HepG2 (cell line): ENCODE measurements at regions of chr4 and their contacts with region 1.

Region 1: GRCh38 chr4:185142912-185143595 is at the start of gene SLC25A4:
- DNase-seq: peak; percentile 77
- ATAC-seq: peak; percentile 91
- H3K4me3 ChIP-seq: peak within 1 kb of the TSS; percentile 75 to 81 (median 79)
- H3K27ac ChIP-seq: peak within 1 kb of the TSS; percentile 70
- H3K4me1 ChIP-seq: peaks cover 34% of the 10 kb centered on the region
- H3K27me3 ChIP-seq: peaks cover 0 to 5% of the 10 kb centered on the region in 2 experiments; a peak in 2 of 5 replicates
- CTCF ChIP-seq: peak; percentile 57; the same call in 1 of the 2 replicates
- EP300 ChIP-seq: peak in 1 of 2 experiments; percentile 39; a peak in 1 of 4 replicates
- POLR2A ChIP-seq: peak; percentile 95 to 98
- RAD21 ChIP-seq: peak; percentile 12
- total RNA-seq, gene SLC25A4: 42.1 and 48.7 TPM in 2 replicates

Region 2: GRCh38 chr4:184733654-184734524 is 409.2 kb before region 1 on chr4 and contains the start of gene CENPU:
- CTCF ChIA-PET with region 1: no interaction called
- POLR2A ChIA-PET with region 1: interaction called, 11 read pairs
- in situ Hi-C with region 1: no loop called
- intact Hi-C with region 1: no loop called
- DNase-seq: peak; percentile 97
- ATAC-seq: peak; percentile 94
- H3K4me3 ChIP-seq: peak within 1 kb of the TSS; percentile 73 to 92 (median 88)
- H3K27ac ChIP-seq: peak within 1 kb of the TSS; percentile 80
- H3K4me1 ChIP-seq: peaks cover 51% of the 10 kb centered on the region
- H3K27me3 ChIP-seq: no peaks in the 10 kb centered on the region
- CTCF ChIP-seq: no peak
- EP300 ChIP-seq: peak; percentile 66 to 67; a peak in 2 of 4 replicates
- POLR2A ChIP-seq: peak; percentile 70 to 80
- RAD21 ChIP-seq: peak; percentile 71
- total RNA-seq, gene CENPU: 35.8 and 39.5 TPM in 2 replicates

Region 3: DNA sequence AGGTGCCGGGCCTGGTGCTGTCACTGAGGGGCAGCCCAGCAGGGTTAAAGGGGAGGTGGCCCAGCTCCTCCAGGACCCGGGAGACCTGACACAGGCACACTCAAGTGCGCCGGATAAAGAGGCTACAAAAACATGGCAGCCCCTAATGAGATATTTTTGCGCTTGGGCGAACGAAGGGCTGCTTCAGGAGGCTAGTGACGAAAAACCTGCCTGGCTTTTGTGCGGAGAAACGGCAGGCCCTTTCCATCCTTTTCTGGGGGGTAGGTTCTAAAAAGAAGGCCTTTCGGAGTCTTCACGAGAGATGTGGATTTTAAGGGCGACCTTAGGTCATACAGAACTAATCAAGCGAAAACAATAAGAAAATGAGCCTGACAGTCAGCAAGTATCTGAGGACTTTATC is 89.3 kb before region 1 on chr4:
- CTCF ChIA-PET with region 1: no interaction called
- POLR2A ChIA-PET with region 1: no interaction called
- in situ Hi-C with region 1: no loop called
- intact Hi-C with region 1: no loop called
- DNase-seq: no peak
- ATAC-seq: no peak
- H3K4me3 ChIP-seq: no peak overlapping the region
- H3K27ac ChIP-seq: no peak overlapping the region
- H3K4me1 ChIP-seq: no peaks in the 10 kb centered on the region
- H3K27me3 ChIP-seq: peaks cover 0 to 51% of the 10 kb centered on the region in 2 experiments; a peak in 4 of 5 replicates
- CTCF ChIP-seq: no peak
- EP300 ChIP-seq: no peak
- POLR2A ChIP-seq: no peak
- RAD21 ChIP-seq: no peak

Region 4: GRCh38 chr4:185203486-185204237 is 60.6 kb after region 1 on chr4 and contains the start of gene CFAP97:
- CTCF ChIA-PET with region 1: no interaction called
- POLR2A ChIA-PET with region 1: interaction called, 16 read pairs
- in situ Hi-C with region 1: no loop called
- intact Hi-C with region 1: loop called (anchors 5 kb)
- DNase-seq: peak; percentile 65
- ATAC-seq: peak; percentile 73
- H3K4me3 ChIP-seq: peak within 1 kb of the TSS; percentile 66 to 82 (median 73)
- H3K27ac ChIP-seq: peak within 1 kb of the TSS; percentile 96
- H3K4me1 ChIP-seq: peaks cover 55% of the 10 kb centered on the region
- H3K27me3 ChIP-seq: no peaks in the 10 kb centered on the region
- CTCF ChIP-seq: no peak
- EP300 ChIP-seq: peak in 1 of 2 experiments; percentile 35; a peak in 1 of 4 replicates
- POLR2A ChIP-seq: peak in 1 of 2 experiments; percentile 34; a peak in 1 of 4 replicates
- RAD21 ChIP-seq: no peak; the same call in 1 of the 2 replicates
- total RNA-seq, gene CFAP97: 44.4 and 67.9 TPM in 2 replicates